Caco-2 (cell line): ENCODE measurements at regions of chr4 and their contacts with region 1.

Region 1: GRCh38 chr4:173257732-173258717 is 76.1 kb downstream of the HMGB2 start:
- DNase-seq: peak; percentile 53 to 60
- H3K4me3 ChIP-seq: no peak overlapping the region
- H3K4me3 Mint-ChIP-seq: no peak overlapping the region
- H3K27ac Mint-ChIP-seq: no peak overlapping the region
- H3K4me1 ChIP-seq: no peaks in the 10 kb centered on the region
- H3K4me1 Mint-ChIP-seq: no peaks in the 10 kb centered on the region
- H3K27me3 ChIP-seq: no peaks in the 10 kb centered on the region
- H3K27me3 Mint-ChIP-seq: no peaks in the 10 kb centered on the region
- CTCF ChIP-seq: peak; percentile 68 to 72

Region 2: GRCh38 chr4:172962564-172963353 is 295.3 kb before region 1 on chr4:
- CTCF ChIA-PET with region 1: no interaction called
- POLR2A ChIA-PET with region 1: no interaction called
- intact Hi-C with region 1: no loop called
- DNase-seq: no peak
- H3K4me3 ChIP-seq: no peak overlapping the region
- H3K4me3 Mint-ChIP-seq: no peak overlapping the region
- H3K27ac Mint-ChIP-seq: no peak overlapping the region
- H3K4me1 ChIP-seq: no peaks in the 10 kb centered on the region
- H3K4me1 Mint-ChIP-seq: no peaks in the 10 kb centered on the region
- H3K27me3 ChIP-seq: no peaks in the 10 kb centered on the region
- H3K27me3 Mint-ChIP-seq: peaks cover 21% of the 10 kb centered on the region
- CTCF ChIP-seq: no peak

Region 3: DNA sequence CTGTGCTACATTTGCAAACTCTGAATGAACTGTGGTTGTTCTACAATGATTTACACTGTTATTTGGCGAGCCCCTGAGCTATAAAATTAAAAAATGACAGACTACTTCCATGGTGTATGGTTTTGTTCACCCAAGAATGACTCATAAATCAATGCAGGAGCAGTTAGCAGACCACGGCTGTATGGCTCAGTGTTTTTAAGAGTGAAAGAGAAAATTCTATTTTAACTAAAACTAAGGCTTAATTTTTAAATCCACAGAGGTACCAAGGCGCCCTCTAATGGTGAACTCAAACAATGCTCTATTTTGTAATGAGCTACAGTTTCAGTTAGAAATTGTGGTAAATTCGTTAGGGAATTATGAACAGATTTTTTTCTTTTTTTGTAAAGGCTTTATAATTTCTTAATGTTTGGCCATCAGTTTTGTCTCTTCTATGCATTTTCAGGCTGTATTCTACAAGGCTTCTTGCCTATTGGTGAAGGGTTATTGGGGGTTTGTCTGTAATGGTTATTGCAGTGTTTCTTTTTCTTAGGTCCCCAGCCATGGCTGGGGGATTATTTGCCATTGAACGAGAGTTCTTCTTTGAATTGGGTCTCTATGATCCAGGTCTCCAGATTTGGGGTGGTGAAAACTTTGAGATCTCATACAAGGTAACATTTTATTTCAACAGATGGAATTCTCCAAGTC is 43.6 kb after region 1 on chr4:
- CTCF ChIA-PET with region 1: no interaction called
- POLR2A ChIA-PET with region 1: no interaction called
- intact Hi-C with region 1: loop called (anchors 2 kb)
- DNase-seq: no peak
- H3K4me3 ChIP-seq: no peak overlapping the region
- H3K4me3 Mint-ChIP-seq: no peak overlapping the region
- H3K27ac Mint-ChIP-seq: no peak overlapping the region
- H3K4me1 ChIP-seq: no peaks in the 10 kb centered on the region
- H3K4me1 Mint-ChIP-seq: no peaks in the 10 kb centered on the region
- H3K27me3 ChIP-seq: no peaks in the 10 kb centered on the region
- H3K27me3 Mint-ChIP-seq: no peaks in the 10 kb centered on the region
- CTCF ChIP-seq: peak; percentile 35 to 50

Region 4: DNA sequence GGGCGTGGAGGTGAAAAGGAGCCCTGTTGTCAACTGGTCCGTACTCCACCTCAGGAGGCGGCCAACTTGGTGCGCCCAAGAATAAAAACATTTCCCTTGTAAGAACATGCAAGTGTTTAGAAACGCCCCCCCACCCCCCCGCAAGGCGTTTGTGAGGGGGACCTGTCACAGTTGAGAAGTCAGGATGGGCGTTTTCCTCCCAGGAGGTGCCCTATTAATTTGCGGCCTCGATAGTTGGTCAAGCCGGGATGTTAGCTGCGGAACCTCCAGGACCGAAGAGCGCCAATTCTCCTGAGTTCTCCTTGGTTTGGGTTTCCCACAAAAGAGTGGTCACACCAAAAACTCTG is 112.1 kb after region 1 on chr4:
- CTCF ChIA-PET with region 1: no interaction called
- POLR2A ChIA-PET with region 1: no interaction called
- intact Hi-C with region 1: no loop called
- DNase-seq: no peak
- H3K4me3 ChIP-seq: peak overlapping the region; percentile 57
- H3K4me3 Mint-ChIP-seq: peak overlapping the region; percentile 85
- H3K27ac Mint-ChIP-seq: peak overlapping the region; percentile 83
- H3K4me1 ChIP-seq: 0 out of 2 replicates have a peak, but pooled peaks cover 3% of the 10 kb centered on the region
- H3K4me1 Mint-ChIP-seq: peaks cover 6% of the 10 kb centered on the region
- H3K27me3 ChIP-seq: no peaks in the 10 kb centered on the region
- H3K27me3 Mint-ChIP-seq: peaks cover 2% of the 10 kb centered on the region
- CTCF ChIP-seq: no peak